ENCODE measurements at regions of chr19 and their contacts with region 1.

Region 1: DNA sequence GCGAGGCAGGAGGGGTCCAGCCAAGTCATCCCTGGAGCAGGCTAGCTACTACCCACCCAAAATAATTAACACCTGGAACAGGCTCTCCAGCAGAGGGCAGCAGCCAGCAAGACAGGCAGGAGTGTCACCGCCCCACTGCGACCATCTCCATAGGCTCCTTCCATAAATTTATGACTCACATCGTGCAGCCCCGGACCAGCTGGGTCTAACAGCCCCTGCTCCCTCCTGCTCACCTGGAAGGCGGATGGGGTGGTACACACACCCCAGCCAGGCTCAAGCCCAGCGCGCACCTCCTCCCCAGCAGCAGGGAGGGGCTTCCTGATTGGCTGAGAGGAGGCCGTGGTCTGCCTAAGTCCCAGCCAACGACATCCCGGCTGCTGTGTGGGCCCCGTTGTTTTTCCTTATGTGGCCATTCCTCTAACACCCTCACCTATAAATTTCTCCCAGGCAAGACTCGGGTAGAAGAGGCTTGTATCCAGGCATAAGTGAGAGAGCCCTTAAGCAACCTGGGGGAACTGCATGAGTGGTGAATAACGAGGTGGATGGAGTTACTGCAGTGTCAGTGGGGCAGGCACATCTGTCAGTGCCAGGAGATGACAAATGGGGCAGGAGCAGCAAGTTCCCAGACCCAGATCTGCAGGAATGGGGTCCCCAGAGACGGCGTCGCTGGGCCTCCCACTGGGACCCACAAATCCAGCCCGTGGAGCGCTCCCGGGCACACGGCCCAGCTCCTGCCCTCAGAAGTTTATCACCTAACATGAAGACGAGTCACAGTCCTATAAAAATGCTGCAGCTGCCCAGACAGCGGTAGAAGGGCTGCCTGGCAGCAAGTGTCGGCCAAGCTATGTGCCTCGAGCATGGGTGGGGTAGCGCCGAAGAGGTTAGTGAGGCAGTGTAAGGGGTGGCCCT is 43.1 kb downstream of the CEBPG start:
- DNase-seq: peak in 1 of 2 donors; percentile 57
- H3K4me3 ChIP-seq: no peak overlapping the region
- H3K27ac ChIP-seq: no peak overlapping the region
- H3K4me1 ChIP-seq: peaks cover 0 to 7% of the 10 kb centered on the region in 2 donors
- H3K27me3 ChIP-seq: no peaks in the 10 kb centered on the region
- CTCF ChIP-seq: peak; percentile 43 to 56 (median 49)
- POLR2A ChIP-seq: no peak

Region 2: GRCh38 chr19:33143897-33144405 is 272.6 kb before region 1 on chr19:
- intact Hi-C with region 1: loop called (anchors 10 kb)
- DNase-seq: peak; percentile 50 to 66
- H3K4me3 ChIP-seq: no peak overlapping the region
- H3K27ac ChIP-seq: no peak overlapping the region
- H3K4me1 ChIP-seq: no peaks in the 10 kb centered on the region
- H3K27me3 ChIP-seq: no peaks in the 10 kb centered on the region
- CTCF ChIP-seq: peak; percentile 81 to 93 (median 89)
- POLR2A ChIP-seq: no peak

Region 3: GRCh38 chr19:33350538-33351309 is 65.8 kb before region 1 on chr19:
- intact Hi-C with region 1: no loop called
- DNase-seq: peak in 1 of 2 donors; percentile 53
- H3K4me3 ChIP-seq: no peak overlapping the region
- H3K27ac ChIP-seq: no peak overlapping the region
- H3K4me1 ChIP-seq: no peaks in the 10 kb centered on the region
- H3K27me3 ChIP-seq: no peaks in the 10 kb centered on the region
- CTCF ChIP-seq: no peak
- POLR2A ChIP-seq: no peak

Region 4: GRCh38 chr19:33578697-33579096 is 162.1 kb after region 1 on chr19:
- intact Hi-C with region 1: no loop called
- DNase-seq: no peak
- H3K4me3 ChIP-seq: no peak overlapping the region
- H3K27ac ChIP-seq: no peak overlapping the region
- H3K4me1 ChIP-seq: no peaks in the 10 kb centered on the region
- H3K27me3 ChIP-seq: no peaks in the 10 kb centered on the region
- CTCF ChIP-seq: no peak
- POLR2A ChIP-seq: no peak

Region 5: GRCh38 chr19:33778089-33778791 is 361.7 kb after region 1 on chr19:
- intact Hi-C with region 1: loop called (anchors 10 kb)
- DNase-seq: peak; percentile 67 to 85
- H3K4me3 ChIP-seq: no peak overlapping the region
- H3K27ac ChIP-seq: no peak overlapping the region
- H3K4me1 ChIP-seq: no peaks in the 10 kb centered on the region
- H3K27me3 ChIP-seq: peaks cover 0 to 4% of the 10 kb centered on the region in 2 donors
- CTCF ChIP-seq: peak; percentile 99 to 100 (median 100)
- POLR2A ChIP-seq: peak in 1 of 2 donors; percentile 50